ENCODE measurements at regions of chr5 and their contacts with region 1.

Region 1: GRCh38 chr5:80093796-80094195 is 58.6 kb downstream of the THBS4 start:
- DNase-seq: no peak
- ATAC-seq: no peak
- H3K4me3 ChIP-seq: no peak overlapping the region
- H3K4me3 Mint-ChIP-seq: no peak overlapping the region
- H3K27ac ChIP-seq: no peak overlapping the region
- H3K27ac Mint-ChIP-seq: peak overlapping the region; percentile 74
- H3K4me1 ChIP-seq: peaks cover 22% of the 10 kb centered on the region
- H3K4me1 Mint-ChIP-seq: peaks cover 35% of the 10 kb centered on the region
- H3K27me3 ChIP-seq: no peaks in the 10 kb centered on the region
- H3K27me3 Mint-ChIP-seq: no peaks in the 10 kb centered on the region
- CTCF ChIP-seq: no peak

Region 2: DNA sequence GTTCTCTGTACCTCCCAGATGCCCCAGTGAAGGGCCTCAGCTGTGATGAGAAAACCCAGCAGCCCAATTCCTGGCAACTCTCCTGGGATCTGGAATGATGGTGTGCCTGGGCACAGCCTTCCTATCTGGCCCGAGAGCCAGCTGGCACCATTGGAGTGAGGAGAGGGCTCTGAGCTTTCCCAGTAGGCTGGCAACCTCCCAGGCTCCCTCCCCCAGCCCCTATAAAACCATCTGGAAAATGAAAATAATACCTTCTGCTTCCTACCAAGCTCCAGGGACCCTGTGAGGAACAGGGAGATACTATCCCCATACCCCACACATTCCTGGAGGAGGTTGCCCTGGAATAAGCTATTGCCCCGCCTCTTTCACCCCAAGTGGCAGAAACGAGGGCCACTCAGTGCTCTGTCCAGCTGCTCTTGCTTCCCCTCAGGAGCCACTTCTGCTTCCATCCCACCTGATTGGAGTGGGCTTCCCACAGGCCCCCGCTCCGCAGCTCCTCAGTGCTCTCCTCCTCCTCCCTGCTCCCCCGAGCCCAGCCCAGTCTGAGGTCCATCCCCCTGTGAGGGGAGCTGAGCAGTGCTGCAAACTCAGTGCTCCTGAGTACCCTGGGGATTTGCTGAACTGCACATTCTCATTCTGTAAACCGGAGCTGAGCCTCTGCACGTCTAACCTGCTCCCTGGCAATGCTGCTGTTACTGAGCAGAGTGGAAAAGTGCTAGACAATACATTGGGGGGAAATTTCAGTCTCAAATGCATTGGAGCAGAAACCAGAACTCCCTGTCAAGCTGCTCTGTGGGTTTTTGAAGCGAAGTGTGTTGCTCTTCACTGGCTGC is 16.1 kb after region 1 on chr5:
- CTCF ChIA-PET with region 1: interaction called, 15 read pairs
- POLR2A ChIA-PET with region 1: interaction called, 3 read pairs
- intact Hi-C with region 1: no loop called
- DNase-seq: no peak
- ATAC-seq: no peak
- H3K4me3 ChIP-seq: no peak overlapping the region
- H3K4me3 Mint-ChIP-seq: peak overlapping the region; percentile 40
- H3K27ac ChIP-seq: no peak overlapping the region
- H3K27ac Mint-ChIP-seq: peak overlapping the region; percentile 76
- H3K4me1 ChIP-seq: peaks cover 13% of the 10 kb centered on the region
- H3K4me1 Mint-ChIP-seq: peaks cover 60% of the 10 kb centered on the region
- H3K27me3 ChIP-seq: no peaks in the 10 kb centered on the region
- H3K27me3 Mint-ChIP-seq: no peaks in the 10 kb centered on the region
- CTCF ChIP-seq: no peak

Region 3: DNA sequence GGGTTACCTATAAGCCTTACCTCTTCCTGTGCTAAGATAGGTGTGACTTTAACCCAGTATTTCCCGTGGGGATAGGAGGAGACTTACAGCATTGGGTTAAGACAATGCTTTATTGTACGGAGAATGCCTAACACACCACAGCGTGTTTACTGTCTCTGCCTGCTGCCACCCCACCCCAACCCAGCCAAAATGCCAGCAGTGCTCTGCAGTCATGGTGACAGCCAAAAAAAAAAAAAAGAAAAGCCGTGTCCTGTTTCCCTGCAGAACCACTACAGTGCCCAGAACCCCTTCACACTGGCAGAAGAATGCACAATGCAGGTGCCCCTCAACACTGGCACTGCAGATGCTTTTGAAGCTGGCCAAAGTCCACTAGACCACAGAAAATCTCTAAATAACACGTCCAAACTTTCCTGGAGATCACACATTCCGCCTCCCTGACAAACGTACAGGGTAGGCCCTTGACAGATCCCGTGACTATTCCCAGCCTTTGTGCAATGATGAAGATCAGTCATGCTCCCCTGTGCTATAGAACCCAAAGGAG is 59.9 kb after region 1 on chr5:
- CTCF ChIA-PET with region 1: interaction called, 6 read pairs
- POLR2A ChIA-PET with region 1: interaction called, 5 read pairs
- intact Hi-C with region 1: loop called in 1 of 2 experiments (anchors 5 kb)
- DNase-seq: peak in 6 of 9 experiments; percentile 35 to 76 (median 46)
- ATAC-seq: peak; percentile 66
- H3K4me3 ChIP-seq: no peak overlapping the region
- H3K4me3 Mint-ChIP-seq: peak overlapping the region; percentile 45
- H3K27ac ChIP-seq: peak overlapping the region; percentile 25 to 64
- H3K27ac Mint-ChIP-seq: peak overlapping the region; percentile 92
- H3K4me1 ChIP-seq: peaks cover 55% of the 10 kb centered on the region
- H3K4me1 Mint-ChIP-seq: peaks cover 65% of the 10 kb centered on the region
- H3K27me3 ChIP-seq: no peaks in the 10 kb centered on the region
- H3K27me3 Mint-ChIP-seq: no peaks in the 10 kb centered on the region
- CTCF ChIP-seq: no peak

Region 4: GRCh38 chr5:80204808-80205614 is 111.2 kb after region 1 on chr5:
- CTCF ChIA-PET with region 1: interaction called, 13 read pairs
- POLR2A ChIA-PET with region 1: interaction called, 3 read pairs
- intact Hi-C with region 1: loop called (anchors 2 to 5 kb)
- DNase-seq: peak in 2 of 9 experiments; percentile 31 to 64
- ATAC-seq: peak; percentile 82
- H3K4me3 ChIP-seq: no peak overlapping the region
- H3K4me3 Mint-ChIP-seq: peak overlapping the region; percentile 47
- H3K27ac ChIP-seq: peak overlapping the region in 1 of 2 experiments; percentile 27
- H3K27ac Mint-ChIP-seq: peak overlapping the region; percentile 87
- H3K4me1 ChIP-seq: peaks cover 78% of the 10 kb centered on the region
- H3K4me1 Mint-ChIP-seq: peaks cover 88% of the 10 kb centered on the region
- H3K27me3 ChIP-seq: no peaks in the 10 kb centered on the region
- H3K27me3 Mint-ChIP-seq: no peaks in the 10 kb centered on the region
- CTCF ChIP-seq: peak; percentile 34

Region 5: DNA sequence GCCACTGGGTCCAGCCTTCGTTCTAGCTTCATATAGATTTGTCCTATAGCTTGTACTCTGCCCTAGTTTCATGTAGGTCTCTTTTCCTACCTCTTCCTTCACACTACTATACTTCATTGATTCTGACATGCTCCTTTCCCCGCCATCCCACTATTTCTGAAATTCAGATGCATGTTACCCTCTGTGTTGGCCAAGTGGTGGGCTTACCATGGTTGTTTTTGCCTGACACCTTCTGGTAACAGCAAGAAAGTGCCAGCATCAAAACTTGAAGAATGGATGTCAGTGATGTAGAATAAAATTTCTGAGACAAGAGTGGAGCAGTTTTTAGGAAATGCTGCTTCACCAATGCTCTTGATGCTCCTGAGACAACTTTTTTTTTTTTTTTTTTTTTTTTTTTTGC is 181.6 kb after region 1 on chr5:
- CTCF ChIA-PET with region 1: interaction called, 70 read pairs
- POLR2A ChIA-PET with region 1: interaction called, 9 read pairs
- intact Hi-C with region 1: loop called (anchors 1 kb)
- DNase-seq: peak in 3 of 9 experiments; percentile 33 to 69 (median 52)
- ATAC-seq: peak; percentile 75
- H3K4me3 ChIP-seq: no peak overlapping the region
- H3K4me3 Mint-ChIP-seq: no peak overlapping the region
- H3K27ac ChIP-seq: no peak overlapping the region
- H3K27ac Mint-ChIP-seq: no peak overlapping the region
- H3K4me1 ChIP-seq: peaks cover 23% of the 10 kb centered on the region
- H3K4me1 Mint-ChIP-seq: peaks cover 24% of the 10 kb centered on the region
- H3K27me3 ChIP-seq: no peaks in the 10 kb centered on the region
- H3K27me3 Mint-ChIP-seq: no peaks in the 10 kb centered on the region
- CTCF ChIP-seq: peak; percentile 51

Region 6: GRCh38 chr5:80672140-80672736 is 578.4 kb after region 1 on chr5:
- CTCF ChIA-PET with region 1: interaction called, 3 read pairs
- POLR2A ChIA-PET with region 1: no interaction called
- intact Hi-C with region 1: loop called (anchors 2 to 5 kb)
- DNase-seq: peak in 8 of 9 experiments; percentile 38 to 75 (median 66)
- ATAC-seq: peak; percentile 84
- H3K4me3 ChIP-seq: no peak overlapping the region
- H3K4me3 Mint-ChIP-seq: no peak overlapping the region
- H3K27ac ChIP-seq: no peak overlapping the region
- H3K27ac Mint-ChIP-seq: no peak overlapping the region
- H3K4me1 ChIP-seq: no peaks in the 10 kb centered on the region
- H3K4me1 Mint-ChIP-seq: peaks cover 4% of the 10 kb centered on the region
- H3K27me3 ChIP-seq: no peaks in the 10 kb centered on the region
- H3K27me3 Mint-ChIP-seq: no peaks in the 10 kb centered on the region
- CTCF ChIP-seq: peak; percentile 88

Measured in CD8-positive, alpha-beta T cell (primary cell).